GM23248 (cell line): ENCODE measurements at regions of chr9 and their contacts with region 1.

Region 1: GRCh38 chr9:17531642-17532254 is 47.1 kb upstream of the SH3GL2 start:
- DNase-seq: peak; percentile 74
- H3K4me3 ChIP-seq: peak overlapping the region; percentile 44; the same call in 1 of the 2 replicates
- H3K27ac ChIP-seq: no peak overlapping the region
- H3K4me1 ChIP-seq: no peaks in the 10 kb centered on the region
- H3K27me3 ChIP-seq: 0 out of 2 replicates have a peak, but pooled peaks cover 3% of the 10 kb centered on the region

Region 2: DNA sequence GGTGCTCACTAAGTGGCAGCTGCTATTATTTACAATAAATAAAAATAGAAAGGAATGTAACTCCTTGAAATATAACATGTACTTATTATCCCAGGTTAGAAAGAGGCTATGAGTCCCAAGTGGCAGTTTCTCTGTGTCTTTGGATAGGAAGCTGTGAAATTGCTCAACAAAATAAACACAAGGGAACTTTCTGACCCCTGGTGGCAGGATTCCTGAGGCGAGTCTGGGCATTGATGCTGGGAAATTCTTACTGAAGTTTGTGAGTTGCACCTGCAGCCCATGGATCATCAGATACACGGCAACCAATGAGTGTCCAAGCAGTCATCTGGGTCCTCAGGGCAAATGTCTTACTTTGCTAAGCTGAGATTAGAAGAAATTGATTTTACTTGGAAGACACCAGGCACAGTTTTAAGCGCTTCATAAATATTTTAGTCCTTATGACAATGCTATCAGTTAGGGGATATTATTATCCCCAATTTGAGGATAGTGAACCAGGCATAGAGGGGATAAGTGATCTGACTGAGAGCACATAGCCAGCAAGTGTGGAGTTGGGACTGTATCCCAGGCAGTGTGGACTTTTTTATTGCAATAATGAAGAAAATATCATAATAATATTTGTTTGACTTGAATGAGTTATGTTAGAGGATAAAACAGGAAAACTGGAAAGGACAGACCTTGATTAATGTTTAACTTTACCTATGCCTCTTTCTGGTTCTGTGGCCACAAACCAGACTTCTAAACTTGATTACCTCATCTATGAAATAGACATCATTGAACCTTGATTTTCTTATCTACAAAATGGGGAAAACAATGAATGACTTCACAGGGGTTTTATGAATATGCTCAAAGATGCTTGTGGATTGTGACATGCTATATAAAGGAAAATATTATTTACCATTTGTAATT is 676.7 kb after region 1 on chr9:
- in situ Hi-C with region 1: loop called (anchors 25 kb)
- DNase-seq: peak; percentile 64
- H3K4me3 ChIP-seq: no peak overlapping the region
- H3K27ac ChIP-seq: no peak overlapping the region
- H3K4me1 ChIP-seq: no peaks in the 10 kb centered on the region
- H3K27me3 ChIP-seq: peaks cover 27% of the 10 kb centered on the region

Region 3: GRCh38 chr9:19048966-19049916 is 1517.5 kb after region 1 on chr9 and contains the start of gene RRAGA:
- in situ Hi-C with region 1: loop called (anchors 25 kb)
- DNase-seq: peak; percentile 98
- H3K4me3 ChIP-seq: peak within 1 kb of the TSS; percentile 89
- H3K27ac ChIP-seq: peak within 1 kb of the TSS; percentile 94
- H3K4me1 ChIP-seq: peaks cover 30% of the 10 kb centered on the region
- H3K27me3 ChIP-seq: no peaks in the 10 kb centered on the region
- total RNA-seq, gene RRAGA: 53.1 and 53.3 TPM in 2 replicates